ENCODE measurements at regions of chr6 and their contacts with region 1.

Region 1: GRCh38 chr6:15691250-15691869 is 28.5 kb upstream of the DTNBP1 start:
- DNase-seq: peak; percentile 91
- ATAC-seq: peak; percentile 99
- H3K4me3 Mint-ChIP-seq: no peak overlapping the region
- H3K27ac Mint-ChIP-seq: peak overlapping the region; percentile 61
- H3K4me1 Mint-ChIP-seq: peaks cover 14% of the 10 kb centered on the region
- H3K27me3 Mint-ChIP-seq: peaks cover 7% of the 10 kb centered on the region

Region 2: GRCh38 chr6:15073344-15073789 is 618.0 kb before region 1 on chr6:
- CTCF ChIA-PET with region 1: no interaction called
- POLR2A ChIA-PET with region 1: no interaction called
- intact Hi-C with region 1: no loop called
- DNase-seq: peak; percentile 12
- ATAC-seq: peak; percentile 78
- H3K4me3 Mint-ChIP-seq: no peak overlapping the region
- H3K27ac Mint-ChIP-seq: no peak overlapping the region
- H3K4me1 Mint-ChIP-seq: peaks cover 13% of the 10 kb centered on the region
- H3K27me3 Mint-ChIP-seq: no peaks in the 10 kb centered on the region

Region 3: GRCh38 chr6:15781890-15782289 is 90.5 kb after region 1 on chr6:
- CTCF ChIA-PET with region 1: interaction called, 11 read pairs
- POLR2A ChIA-PET with region 1: no interaction called
- intact Hi-C with region 1: loop called in 1 of 2 experiments (anchors 5 kb)
- DNase-seq: no peak
- ATAC-seq: no peak
- H3K4me3 Mint-ChIP-seq: no peak overlapping the region
- H3K27ac Mint-ChIP-seq: no peak overlapping the region
- H3K4me1 Mint-ChIP-seq: peaks cover 35% of the 10 kb centered on the region
- H3K27me3 Mint-ChIP-seq: no peaks in the 10 kb centered on the region

Measured in activated CD4-positive, alpha-beta T cell treated with anti-CD3 and anti-CD28 coated beads for 36 hours (primary cell).